HepG2 (cell line): ENCODE measurements at regions of chr4 and their contacts with region 1.

Region 1: DNA sequence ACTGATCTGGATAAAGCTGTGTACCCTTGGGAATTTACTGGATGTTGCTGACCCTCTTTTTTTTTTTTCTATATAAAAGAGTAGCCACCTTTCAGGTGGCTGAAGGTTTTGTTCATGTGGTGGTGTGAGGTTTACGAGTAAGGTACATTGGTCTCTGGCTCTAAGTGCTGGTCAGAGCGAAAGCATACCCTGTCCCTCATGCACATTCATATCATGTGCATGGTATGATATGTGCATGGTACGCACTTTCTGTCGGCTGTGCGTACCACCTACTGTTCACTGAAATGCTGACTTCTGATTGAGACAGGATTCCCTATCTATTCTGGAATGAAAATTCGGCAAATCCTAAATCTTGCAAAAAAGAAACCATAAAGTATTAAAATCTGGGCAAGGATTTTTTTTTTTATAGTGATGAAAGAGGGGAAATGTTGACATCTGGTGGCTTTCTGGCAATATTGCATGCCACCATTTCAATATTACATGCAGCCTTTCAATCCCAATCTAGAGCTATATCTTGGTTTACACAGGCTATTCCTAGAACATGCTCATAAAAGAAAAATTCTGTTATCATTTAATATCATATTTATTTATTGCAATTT is 32.8 kb downstream of the FAM149A start:
- DNase-seq: no peak
- ATAC-seq: no peak
- H3K4me3 ChIP-seq: no peak overlapping the region
- H3K27ac ChIP-seq: no peak overlapping the region
- H3K4me1 ChIP-seq: no peaks in the 10 kb centered on the region
- H3K27me3 ChIP-seq: peaks cover 0 to 8% of the 10 kb centered on the region in 2 experiments; a peak in 1 of 5 replicates
- CTCF ChIP-seq: peak; percentile 50
- EP300 ChIP-seq: no peak
- POLR2A ChIP-seq: no peak
- RAD21 ChIP-seq: no peak

Region 2: DNA sequence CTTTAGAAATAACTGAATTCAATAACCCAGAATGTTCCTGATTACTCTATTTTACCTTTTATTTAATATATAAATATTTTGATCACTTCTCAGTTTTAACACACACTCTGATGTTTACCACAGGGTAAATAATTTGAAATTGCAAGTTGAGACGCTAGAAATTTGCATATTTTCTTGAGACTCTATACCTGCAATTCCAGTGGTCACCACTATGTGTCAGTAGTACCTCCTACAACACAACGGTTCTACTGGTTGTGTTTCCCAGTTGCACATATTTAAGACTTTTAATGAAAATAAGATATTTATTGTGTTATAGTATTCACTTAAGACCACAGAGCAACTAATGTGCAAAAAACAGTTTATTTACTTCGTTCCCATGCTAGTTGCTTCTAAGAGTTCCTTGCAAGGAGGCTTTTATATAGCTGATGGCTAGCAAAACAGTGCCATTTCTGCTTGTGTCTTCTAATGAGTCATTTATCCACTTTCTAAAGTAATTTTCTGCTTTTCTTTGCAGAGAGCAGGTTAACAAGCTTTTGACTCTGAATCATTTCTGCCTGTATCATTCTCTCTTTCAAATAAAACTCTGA is 503.1 kb before region 1 on chr4:
- CTCF ChIA-PET with region 1: no interaction called
- POLR2A ChIA-PET with region 1: no interaction called
- in situ Hi-C with region 1: no loop called
- intact Hi-C with region 1: loop called (anchors 10 kb)
- DNase-seq: peak; percentile 9
- ATAC-seq: no peak
- H3K4me3 ChIP-seq: no peak overlapping the region
- H3K27ac ChIP-seq: no peak overlapping the region
- H3K4me1 ChIP-seq: no peaks in the 10 kb centered on the region
- H3K27me3 ChIP-seq: no peaks in the 10 kb centered on the region; a peak in 1 of 5 replicates
- CTCF ChIP-seq: peak; percentile 65
- EP300 ChIP-seq: no peak
- POLR2A ChIP-seq: no peak
- RAD21 ChIP-seq: no peak

Region 3: GRCh38 chr4:186051096-186051495 is 86.2 kb before region 1 on chr4:
- CTCF ChIA-PET with region 1: no interaction called
- POLR2A ChIA-PET with region 1: no interaction called
- in situ Hi-C with region 1: no loop called
- intact Hi-C with region 1: no loop called
- DNase-seq: no peak
- ATAC-seq: no peak
- H3K4me3 ChIP-seq: no peak overlapping the region
- H3K27ac ChIP-seq: no peak overlapping the region
- H3K4me1 ChIP-seq: no peaks in the 10 kb centered on the region
- H3K27me3 ChIP-seq: no peaks in the 10 kb centered on the region; a peak in 2 of 5 replicates
- CTCF ChIP-seq: no peak
- EP300 ChIP-seq: no peak
- POLR2A ChIP-seq: no peak
- RAD21 ChIP-seq: no peak